Dendritic cell treated with granulocyte-macrophage colony-stimulating factor and Interleukin-4, amounts not matched to agents 40 ng/mL and 50 ng/mL, for 4 days (primary cell): ENCODE measurements at regions of chr11 and their contacts with region 1.

Region 1: DNA sequence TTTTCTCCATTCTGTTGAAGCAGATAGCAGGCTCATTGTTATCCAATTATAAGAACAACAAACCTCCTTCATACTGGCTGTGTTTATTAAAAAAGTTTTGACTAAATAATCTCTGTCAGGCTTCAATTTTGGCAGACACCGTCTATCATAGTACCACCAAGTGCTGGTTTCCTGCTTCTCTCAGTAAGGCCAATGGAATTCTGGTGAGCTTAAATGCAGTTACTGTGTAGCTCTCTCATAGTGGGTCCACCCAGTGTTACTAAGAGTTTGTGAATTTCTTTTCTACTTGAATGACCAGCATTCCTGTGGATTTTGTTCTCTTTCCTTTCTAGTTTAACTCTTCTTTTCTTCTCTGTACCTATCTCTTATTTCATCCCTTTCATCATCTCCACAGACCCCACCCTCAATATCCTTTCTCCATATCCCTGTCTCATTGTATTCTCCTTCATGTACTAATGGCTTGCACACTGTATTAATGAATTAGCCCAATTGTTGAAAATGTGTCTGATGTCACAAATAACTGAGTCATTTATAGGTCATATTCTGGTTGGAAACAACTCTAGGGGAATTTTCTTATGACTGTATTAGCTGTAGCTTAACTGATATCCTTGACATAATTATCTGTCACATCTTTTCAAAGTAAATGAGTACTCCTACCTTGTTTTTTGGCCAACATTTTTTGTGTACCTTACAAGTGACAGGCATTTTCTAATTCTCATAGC is 372.1 kb downstream of the FAT3 start:
- H3K4me3 Mint-ChIP-seq: no peak overlapping the region
- H3K27ac Mint-ChIP-seq: no peak overlapping the region
- H3K4me1 Mint-ChIP-seq: no peaks in the 10 kb centered on the region
- H3K27me3 Mint-ChIP-seq: no peaks in the 10 kb centered on the region

Region 2: DNA sequence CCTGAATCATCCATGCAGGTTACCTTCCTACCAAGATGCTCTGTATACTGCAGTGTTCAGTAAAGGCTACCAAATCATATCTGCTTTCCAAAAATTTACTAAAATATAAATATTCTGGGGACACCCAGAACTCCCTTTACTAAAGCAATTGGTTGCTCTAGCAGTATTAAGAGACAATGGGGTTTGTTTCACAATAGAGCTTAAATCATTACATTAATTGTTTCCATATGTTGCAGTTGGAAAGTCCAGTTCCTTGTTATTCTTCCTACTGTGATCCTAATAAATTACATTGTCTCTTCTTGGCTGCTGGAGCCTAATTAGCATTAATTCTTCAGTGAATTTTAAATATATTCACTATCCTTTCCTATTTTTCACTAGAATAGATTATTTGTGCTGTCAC is 56.7 kb after region 1 on chr11:
- intact Hi-C with region 1: loop called (anchors 10 kb)
- H3K4me3 Mint-ChIP-seq: no peak overlapping the region
- H3K27ac Mint-ChIP-seq: no peak overlapping the region
- H3K4me1 Mint-ChIP-seq: no peaks in the 10 kb centered on the region
- H3K27me3 Mint-ChIP-seq: no peaks in the 10 kb centered on the region